Activated CD8-positive, alpha-beta T cell treated with anti-CD3 and anti-CD28 coated beads, Interleukin-2, amount 10 ng/mL, durations not matched to agents 7 days and 5 days (primary cell): ENCODE measurements at regions of chr10 and their contacts with region 1.

Region 1: DNA sequence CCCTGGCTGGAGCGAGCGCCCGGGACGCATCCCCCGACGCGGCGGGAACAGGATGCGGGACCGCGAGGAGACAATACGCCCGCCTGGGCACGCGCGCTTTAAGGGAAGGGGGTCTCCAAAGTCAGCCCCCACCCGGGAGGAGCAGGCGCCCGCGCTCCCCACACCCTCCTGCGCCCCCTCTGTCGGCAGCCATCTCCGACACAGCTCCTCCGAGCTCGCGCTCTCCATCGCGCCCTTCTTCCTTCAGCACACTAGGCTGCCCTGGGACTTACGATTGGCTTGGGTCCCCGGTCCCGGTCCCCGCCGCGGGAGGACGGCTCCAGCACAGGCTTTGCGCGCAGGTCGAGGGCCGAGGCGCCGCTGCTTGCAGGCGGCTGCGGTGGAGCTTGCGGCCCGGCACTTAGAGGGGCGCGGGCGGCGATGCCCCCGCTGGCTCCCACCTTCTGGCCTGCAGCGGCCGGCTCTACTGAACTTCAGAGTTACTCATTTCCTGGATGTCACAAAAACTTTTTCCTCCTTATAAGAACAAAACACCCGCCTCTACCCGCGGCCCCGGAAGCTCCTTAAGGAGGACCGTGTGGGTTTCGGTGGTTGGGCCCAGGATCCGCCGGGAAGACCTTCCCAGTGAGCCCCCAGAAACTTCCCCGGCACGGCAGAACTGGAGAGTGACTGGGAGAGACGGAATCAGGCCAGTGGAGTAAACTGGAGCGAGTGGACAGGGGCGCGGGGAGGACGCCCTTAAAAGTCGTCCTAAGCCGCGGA is at the start of gene ITPRIP:
- DNase-seq: peak; percentile 82
- ATAC-seq: peak; percentile 79
- H3K4me3 Mint-ChIP-seq: peak within 1 kb of the TSS; percentile 94
- H3K27ac Mint-ChIP-seq: peak within 1 kb of the TSS; percentile 100
- H3K4me1 Mint-ChIP-seq: peaks cover 49% of the 10 kb centered on the region
- H3K27me3 Mint-ChIP-seq: peaks cover 10% of the 10 kb centered on the region
- total RNA-seq, gene ITPRIP: 26.6 to 27.1 TPM

Region 2: DNA sequence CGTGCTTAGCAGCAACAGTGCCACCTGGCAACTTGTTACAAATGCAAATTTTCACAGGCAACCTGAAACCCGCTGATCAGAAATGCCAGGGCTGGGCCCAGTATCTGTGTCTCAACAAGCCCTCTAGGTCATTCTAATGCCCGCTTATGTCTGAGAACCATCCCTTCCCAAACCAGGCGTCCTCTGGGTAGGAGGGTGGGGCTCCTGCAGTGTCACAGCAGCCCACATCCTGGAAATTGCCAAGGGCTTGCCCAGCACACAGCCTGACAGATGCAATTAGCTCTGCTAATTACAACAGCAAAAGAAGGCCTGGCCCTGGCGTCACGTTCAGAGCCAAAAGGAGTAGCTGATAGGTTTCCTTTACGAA is 15.8 kb before region 1 on chr10:
- CTCF ChIA-PET with region 1: interaction called, 8 read pairs
- POLR2A ChIA-PET with region 1: interaction called, 13 read pairs
- DNase-seq: peak; percentile 65
- ATAC-seq: peak; percentile 54
- H3K4me3 Mint-ChIP-seq: peak overlapping the region; percentile 61
- H3K27ac Mint-ChIP-seq: peak overlapping the region; percentile 91
- H3K4me1 Mint-ChIP-seq: peaks cover 93% of the 10 kb centered on the region
- H3K27me3 Mint-ChIP-seq: no peaks in the 10 kb centered on the region

Region 3: DNA sequence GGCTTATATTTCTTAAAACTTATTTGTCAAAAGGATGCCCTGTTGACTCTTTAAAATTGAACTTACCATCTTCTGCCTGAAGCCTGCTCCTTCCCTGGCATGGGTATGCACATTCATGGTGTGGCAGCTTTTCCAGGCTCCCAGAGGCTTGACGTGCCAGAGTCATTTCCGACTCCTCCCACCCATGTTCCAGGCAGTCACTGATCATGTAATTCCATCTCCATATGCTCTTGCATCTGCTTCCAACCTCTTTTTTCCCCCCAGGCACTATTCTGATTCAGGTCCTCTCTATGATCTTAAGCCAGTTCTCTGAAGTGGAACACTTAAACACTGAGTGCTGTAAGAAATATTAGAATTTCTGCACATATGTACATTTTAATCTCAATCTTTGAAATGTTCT is 97.7 kb after region 1 on chr10:
- CTCF ChIA-PET with region 1: no interaction called
- POLR2A ChIA-PET with region 1: no interaction called
- DNase-seq: no peak
- ATAC-seq: no peak
- H3K4me3 Mint-ChIP-seq: no peak overlapping the region
- H3K27ac Mint-ChIP-seq: no peak overlapping the region
- H3K4me1 Mint-ChIP-seq: no peaks in the 10 kb centered on the region
- H3K27me3 Mint-ChIP-seq: peaks cover 11% of the 10 kb centered on the region